ENCODE measurements at regions of chr6 and their contacts with region 1.

Region 1: DNA sequence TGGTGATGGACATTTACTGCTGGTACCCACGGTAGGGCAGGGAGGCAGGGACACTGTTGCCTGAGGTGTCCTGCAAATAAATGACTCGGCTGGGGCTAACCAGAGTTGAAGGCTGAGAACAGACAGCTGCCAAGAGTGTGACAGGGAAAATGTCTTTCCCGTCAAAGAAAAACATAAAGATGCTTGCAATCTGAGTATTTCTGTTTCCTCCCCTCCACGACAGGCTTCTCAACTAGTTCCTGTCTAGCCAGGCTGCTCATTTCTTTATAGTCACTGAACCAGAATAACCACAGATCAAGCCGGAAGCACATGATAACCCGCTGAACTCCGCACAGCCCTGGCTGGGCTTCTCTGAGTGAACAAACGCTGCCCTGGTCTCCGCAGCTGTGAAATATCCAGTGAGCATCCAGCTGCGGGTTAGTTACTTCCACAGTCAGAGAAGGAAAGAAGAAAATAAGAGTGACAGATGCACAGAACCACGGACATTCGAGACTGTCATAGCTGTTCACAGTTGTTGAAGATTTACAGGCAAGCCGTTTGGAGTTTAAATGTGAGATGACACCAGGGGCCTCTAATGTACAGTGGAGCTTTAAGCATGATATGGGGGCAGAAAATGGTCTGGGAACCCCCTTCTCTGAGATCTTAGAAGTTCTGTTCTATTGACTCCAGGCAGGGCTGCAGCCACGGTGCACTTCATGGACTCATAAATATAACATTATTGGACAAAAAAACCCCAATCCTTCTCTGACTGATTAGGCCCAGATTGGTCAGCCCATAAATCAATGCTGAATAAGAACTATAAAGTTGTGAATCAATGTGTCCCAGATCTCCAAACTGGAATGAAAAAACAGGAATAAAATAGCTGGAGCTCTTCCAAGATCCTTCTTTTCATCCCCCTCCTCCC is 299.9 kb upstream of the SUPT3H start:
- DNase-seq: peak; percentile 54
- ATAC-seq: peak; percentile 76
- H3K4me3 Mint-ChIP-seq: peak overlapping the region; percentile 73
- H3K27ac Mint-ChIP-seq: peak overlapping the region; percentile 85
- H3K4me1 Mint-ChIP-seq: peaks cover 53% of the 10 kb centered on the region
- H3K27me3 Mint-ChIP-seq: no peaks in the 10 kb centered on the region
- CTCF ChIP-seq: no peak

Region 2: GRCh38 chr6:45377554-45378333 is 299.9 kb before region 1 on chr6 and contains the start of gene SUPT3H:
- CTCF ChIA-PET with region 1: no interaction called
- POLR2A ChIA-PET with region 1: interaction called, 8 read pairs
- intact Hi-C with region 1: loop called (anchors 1 kb)
- DNase-seq: peak; percentile 91
- ATAC-seq: peak; percentile 79
- H3K4me3 Mint-ChIP-seq: peak within 1 kb of the TSS; percentile 99
- H3K27ac Mint-ChIP-seq: peak within 1 kb of the TSS; percentile 99
- H3K4me1 Mint-ChIP-seq: peaks cover 26% of the 10 kb centered on the region
- H3K27me3 Mint-ChIP-seq: no peaks in the 10 kb centered on the region
- CTCF ChIP-seq: no peak
- total RNA-seq, gene SUPT3H: 9.9 and 10.4 TPM in 2 replicates

Region 3: DNA sequence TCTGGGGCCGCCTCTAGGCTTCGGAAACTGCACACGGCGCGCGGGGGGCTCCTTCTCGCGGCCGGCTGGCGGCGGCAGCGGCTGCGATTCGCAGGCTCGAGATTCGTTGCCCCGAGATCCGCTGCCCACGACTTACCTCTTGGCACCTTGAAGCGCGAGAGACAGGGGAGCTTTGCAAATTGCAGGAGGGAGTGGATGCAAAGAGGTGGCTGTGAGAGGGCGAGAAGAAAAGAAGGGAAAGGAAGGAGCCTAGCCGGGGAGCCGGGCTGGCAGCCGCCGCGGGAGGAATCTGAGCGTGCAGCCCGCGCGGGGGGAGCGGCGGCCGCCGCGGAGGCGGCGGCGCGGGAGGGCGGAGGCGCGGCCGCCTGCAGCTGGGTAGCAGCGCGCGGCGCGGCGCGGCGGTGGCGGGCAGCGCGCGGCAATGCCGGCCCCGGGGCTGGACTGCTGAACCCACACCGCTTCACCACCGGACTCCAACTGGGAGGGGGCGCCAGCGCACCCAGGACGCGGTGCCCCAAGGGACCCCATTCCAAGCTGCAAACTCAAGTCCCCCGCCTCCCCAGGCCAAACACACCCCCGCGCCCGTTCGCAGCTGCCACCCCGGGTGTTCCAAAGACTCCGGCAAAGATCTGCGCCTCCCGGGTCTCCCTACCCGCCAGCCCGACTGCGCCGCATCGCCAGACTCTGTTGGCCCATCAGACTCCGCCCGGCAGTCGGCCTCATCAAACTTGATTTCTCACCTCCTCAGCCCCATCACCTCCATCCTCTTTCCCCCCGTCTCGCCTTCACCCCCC is 255.7 kb before region 1 on chr6:
- CTCF ChIA-PET with region 1: no interaction called
- POLR2A ChIA-PET with region 1: interaction called, 4 read pairs
- intact Hi-C with region 1: loop called (anchors 5 kb)
- DNase-seq: peak; percentile 50
- ATAC-seq: peak; percentile 40
- H3K4me3 Mint-ChIP-seq: peak overlapping the region; percentile 90
- H3K27ac Mint-ChIP-seq: peak overlapping the region; percentile 76
- H3K4me1 Mint-ChIP-seq: peaks cover 54% of the 10 kb centered on the region
- H3K27me3 Mint-ChIP-seq: peaks cover 39% of the 10 kb centered on the region
- CTCF ChIP-seq: no peak

Region 4: DNA sequence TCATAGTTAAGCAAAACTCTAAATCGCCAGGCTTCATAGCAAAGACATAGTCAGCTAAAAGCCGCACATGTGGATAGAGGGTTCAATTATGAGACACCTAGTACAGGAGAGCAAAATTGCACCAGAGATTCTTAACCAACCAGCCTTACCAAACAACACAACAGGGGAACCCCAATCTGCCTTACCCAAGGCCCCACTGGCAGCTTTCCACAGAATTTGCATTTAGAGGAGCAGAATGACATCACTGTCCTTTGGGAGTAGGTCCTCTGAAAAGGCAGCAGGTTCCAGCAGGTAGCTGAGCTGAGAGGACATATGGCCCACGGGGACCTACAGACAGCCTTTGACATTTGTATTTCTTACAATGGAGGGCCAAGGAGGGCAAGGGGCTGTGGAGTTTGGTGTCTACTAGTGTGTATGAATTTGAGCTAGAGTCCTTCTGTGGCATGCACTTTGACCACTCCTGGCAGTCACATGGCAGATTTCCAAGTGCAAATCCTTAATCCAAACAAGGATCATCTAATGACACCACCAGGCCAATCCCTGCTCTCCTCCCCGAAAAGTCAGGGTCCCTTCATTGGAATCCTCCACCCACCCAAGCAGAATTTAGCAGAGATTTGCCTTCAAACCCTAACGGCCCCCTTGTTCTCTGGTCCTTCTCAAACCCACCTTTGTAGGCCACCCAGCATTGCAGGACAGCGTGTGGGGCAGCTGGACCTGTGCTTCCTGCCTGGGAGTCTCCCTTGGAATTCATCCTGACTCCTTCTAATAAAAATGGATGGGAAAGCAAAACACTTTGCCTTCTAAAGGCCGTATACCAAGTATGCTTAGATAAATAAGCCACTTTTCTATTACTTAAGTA is 128.7 kb before region 1 on chr6:
- CTCF ChIA-PET with region 1: no interaction called
- POLR2A ChIA-PET with region 1: no interaction called
- intact Hi-C with region 1: loop called (anchors 2 kb)
- DNase-seq: peak; percentile 20
- ATAC-seq: peak; percentile 97
- H3K4me3 Mint-ChIP-seq: peak overlapping the region; percentile 9
- H3K27ac Mint-ChIP-seq: no peak overlapping the region
- H3K4me1 Mint-ChIP-seq: peaks cover 15% of the 10 kb centered on the region
- H3K27me3 Mint-ChIP-seq: no peaks in the 10 kb centered on the region
- CTCF ChIP-seq: no peak

Region 5: DNA sequence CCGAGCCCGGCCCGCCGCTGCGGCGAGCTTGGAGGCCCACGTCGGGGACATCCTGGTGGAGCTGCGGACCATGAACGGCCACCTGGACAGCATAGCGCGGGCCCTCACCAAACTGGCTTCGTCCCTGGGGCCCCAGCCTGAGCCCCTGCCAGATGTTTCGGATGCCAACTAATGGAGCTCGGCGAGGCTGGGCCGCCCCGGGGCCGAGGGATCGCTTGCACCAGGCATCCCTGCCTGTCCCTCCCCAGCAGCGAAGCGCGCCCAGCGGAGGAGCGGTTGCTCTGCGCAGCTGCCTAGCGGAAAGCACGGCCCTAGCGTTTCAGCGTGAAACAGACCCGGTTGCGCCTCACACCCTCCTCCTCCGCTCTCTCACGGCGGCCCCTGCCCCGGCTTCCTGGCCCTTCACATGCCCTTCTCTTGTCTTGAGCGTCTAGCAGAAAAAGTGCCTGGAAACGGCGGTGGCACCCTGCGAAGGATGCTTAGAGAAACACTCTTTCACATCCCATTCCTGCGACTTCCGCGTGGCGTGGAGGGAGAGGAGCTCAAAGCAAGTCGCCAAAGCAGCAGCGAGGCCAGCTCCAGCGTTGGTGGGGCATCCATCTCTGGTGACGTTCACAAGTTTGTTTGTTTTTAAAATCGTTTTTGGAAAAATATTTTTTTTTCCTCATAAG is 13.9 kb before region 1 on chr6:
- CTCF ChIA-PET with region 1: no interaction called
- POLR2A ChIA-PET with region 1: interaction called, 3 read pairs
- intact Hi-C with region 1: loop called (anchors 2 kb)
- DNase-seq: peak; percentile 45
- ATAC-seq: peak; percentile 71
- H3K4me3 Mint-ChIP-seq: peak overlapping the region; percentile 71
- H3K27ac Mint-ChIP-seq: no peak overlapping the region
- H3K4me1 Mint-ChIP-seq: peaks cover 39% of the 10 kb centered on the region
- H3K27me3 Mint-ChIP-seq: peaks cover 18% of the 10 kb centered on the region
- CTCF ChIP-seq: no peak

Region 6: DNA sequence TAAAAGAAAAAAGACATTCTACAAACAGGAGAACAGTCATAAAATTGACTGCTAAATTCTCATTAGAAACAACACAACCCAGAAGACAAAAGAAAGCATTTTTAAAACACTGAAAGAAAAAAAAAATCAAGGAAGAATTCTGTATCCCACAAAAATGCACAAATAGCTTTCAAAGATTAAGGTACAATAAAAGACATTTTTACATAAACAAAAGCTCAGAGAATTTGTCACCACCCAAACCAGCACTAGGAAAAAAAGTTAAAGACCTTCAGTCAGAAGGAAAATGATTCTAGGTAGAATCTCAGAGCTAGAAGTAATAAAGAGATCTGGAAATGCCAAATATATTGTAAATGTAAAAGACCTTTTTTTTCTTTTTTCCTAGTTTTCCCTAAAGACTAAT is 85.6 kb after region 1 on chr6:
- CTCF ChIA-PET with region 1: no interaction called
- POLR2A ChIA-PET with region 1: no interaction called
- intact Hi-C with region 1: no loop called
- DNase-seq: no peak
- ATAC-seq: no peak
- H3K4me3 Mint-ChIP-seq: no peak overlapping the region
- H3K27ac Mint-ChIP-seq: no peak overlapping the region
- H3K4me1 Mint-ChIP-seq: no peaks in the 10 kb centered on the region
- H3K27me3 Mint-ChIP-seq: peaks cover 13% of the 10 kb centered on the region
- CTCF ChIP-seq: no peak

Measured in activated B cell treated with CpG ODN at 0.5 μM for 24 hours (primary cell).